Transverse colon (tissue), 4 donors: ENCODE measurements at regions of chr4 and their contacts with region 1.

Region 1: GRCh38 chr4:108270466-108271450 is 102.0 kb upstream of the LEF1 start:
- DNase-seq: no peak
- H3K4me3 ChIP-seq: no peak overlapping the region
- H3K27ac ChIP-seq: no peak overlapping the region
- H3K4me1 ChIP-seq: no peaks in the 10 kb centered on the region
- H3K27me3 ChIP-seq: no peaks in the 10 kb centered on the region
- CTCF ChIP-seq: no peak
- EP300 ChIP-seq: no peak
- POLR2A ChIP-seq: no peak

Region 2: DNA sequence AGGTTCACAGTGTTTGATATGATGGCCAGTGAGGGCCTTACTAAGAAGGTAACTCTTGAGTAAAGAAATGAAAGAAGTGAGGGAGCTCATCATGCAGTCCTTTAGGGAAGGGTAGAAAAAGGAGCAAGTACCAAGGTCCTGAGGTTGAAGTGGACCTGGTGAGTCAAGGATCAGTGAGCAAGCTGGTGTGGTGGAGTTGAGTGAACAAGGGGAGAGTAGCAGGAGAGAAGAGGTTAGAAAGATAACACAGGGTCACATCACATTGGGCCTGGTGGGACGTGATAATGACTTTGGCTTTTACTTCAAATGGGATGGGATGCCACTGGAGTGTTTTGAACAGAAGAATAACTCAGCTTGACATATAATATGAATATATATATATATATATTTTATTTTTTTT is 424.3 kb after region 1 on chr4:
- in situ Hi-C with region 1: no loop called
- intact Hi-C with region 1: loop called (anchors 5 kb)
- DNase-seq: no peak
- H3K4me3 ChIP-seq: no peak overlapping the region
- H3K27ac ChIP-seq: no peak overlapping the region
- H3K4me1 ChIP-seq: no peaks in the 10 kb centered on the region
- H3K27me3 ChIP-seq: no peaks in the 10 kb centered on the region
- CTCF ChIP-seq: no peak
- EP300 ChIP-seq: no peak
- POLR2A ChIP-seq: no peak